ENCODE measurements at regions of chr13 and their contacts with region 1.

Region 1: DNA sequence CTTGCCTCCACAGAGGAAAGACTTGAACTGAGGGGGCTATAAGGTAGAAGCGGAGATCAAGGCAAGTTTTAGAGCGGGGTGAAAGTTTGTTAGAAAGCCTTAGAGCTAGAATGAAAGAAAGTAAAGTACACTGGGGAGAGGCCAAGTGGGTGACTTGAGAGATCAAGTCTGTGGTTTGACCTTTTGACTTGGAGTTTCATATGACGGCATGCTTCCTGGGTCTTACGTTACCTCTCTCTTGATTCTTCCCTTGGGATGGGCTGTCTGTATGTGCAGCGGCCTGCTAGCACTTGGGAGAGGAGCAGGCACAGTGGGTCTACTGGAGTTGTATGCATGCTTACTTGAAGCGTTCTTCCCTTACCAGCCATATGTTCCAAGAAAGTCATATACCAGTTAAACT is 1768.5 kb downstream of the PCDH9 start:
- DNase-seq: no peak
- H3K4me3 ChIP-seq: no peak overlapping the region
- H3K27ac ChIP-seq: no peak overlapping the region
- H3K4me1 ChIP-seq: no peaks in the 10 kb centered on the region
- H3K27me3 ChIP-seq: no peaks in the 10 kb centered on the region
- CTCF ChIP-seq: no peak

Region 2: DNA sequence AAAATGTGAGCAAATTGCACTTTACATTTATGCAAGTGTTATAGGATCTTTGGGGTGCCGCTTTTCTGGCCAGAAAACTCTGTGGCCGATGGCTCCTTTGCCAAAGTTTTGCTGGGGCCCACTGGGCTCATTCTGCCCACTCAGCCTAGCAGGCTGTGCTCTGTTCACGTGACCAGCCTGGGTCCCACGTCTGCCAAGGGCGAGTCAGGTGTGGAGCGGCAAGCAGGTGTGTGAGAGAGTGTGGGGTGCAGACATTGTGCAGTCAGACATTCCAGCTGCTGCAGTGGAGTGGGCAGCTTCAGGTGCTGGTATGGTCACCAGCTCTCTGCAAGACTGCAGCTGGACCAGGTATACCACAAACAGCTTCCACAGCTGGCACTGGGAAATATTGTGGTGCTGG is 537.2 kb before region 1 on chr13:
- intact Hi-C with region 1: no loop called
- DNase-seq: no peak
- H3K4me3 ChIP-seq: no peak overlapping the region
- H3K27ac ChIP-seq: no peak overlapping the region
- H3K4me1 ChIP-seq: no peaks in the 10 kb centered on the region
- H3K27me3 ChIP-seq: no peaks in the 10 kb centered on the region
- CTCF ChIP-seq: no peak

Region 3: GRCh38 chr13:65400697-65401096 is 60.9 kb before region 1 on chr13:
- intact Hi-C with region 1: no loop called
- DNase-seq: no peak
- H3K4me3 ChIP-seq: no peak overlapping the region
- H3K27ac ChIP-seq: no peak overlapping the region
- H3K4me1 ChIP-seq: no peaks in the 10 kb centered on the region
- H3K27me3 ChIP-seq: no peaks in the 10 kb centered on the region
- CTCF ChIP-seq: no peak

Region 4: DNA sequence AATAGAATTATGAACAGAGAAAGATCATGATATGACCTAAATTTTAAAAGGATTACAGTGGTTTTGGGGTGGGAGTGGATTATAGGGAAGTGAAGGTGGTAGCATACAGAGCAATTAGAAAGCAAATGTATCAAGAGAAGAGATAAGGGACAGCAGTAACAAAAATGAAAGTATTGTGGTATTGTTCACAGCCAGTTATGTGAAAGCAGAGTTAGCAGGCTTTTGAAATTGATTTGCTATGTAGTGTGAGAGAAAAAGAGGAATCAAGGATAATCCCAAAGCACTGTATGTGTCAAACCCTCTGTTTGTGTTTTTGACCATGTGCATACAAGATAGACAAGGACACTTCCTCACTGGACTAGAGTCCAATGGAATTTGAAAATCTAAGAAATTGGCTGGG is 47.2 kb after region 1 on chr13:
- intact Hi-C with region 1: loop called (anchors 2 kb)
- DNase-seq: no peak
- H3K4me3 ChIP-seq: no peak overlapping the region
- H3K27ac ChIP-seq: no peak overlapping the region
- H3K4me1 ChIP-seq: no peaks in the 10 kb centered on the region
- H3K27me3 ChIP-seq: no peaks in the 10 kb centered on the region
- CTCF ChIP-seq: no peak

Region 5: GRCh38 chr13:66657165-66657881 is 1195.7 kb after region 1 on chr13:
- intact Hi-C with region 1: no loop called
- DNase-seq: peak in 1 of 2 donors; percentile 25
- H3K4me3 ChIP-seq: no peak overlapping the region
- H3K27ac ChIP-seq: no peak overlapping the region
- H3K4me1 ChIP-seq: no peaks in the 10 kb centered on the region
- H3K27me3 ChIP-seq: no peaks in the 10 kb centered on the region
- CTCF ChIP-seq: no peak